ENCODE measurements at regions of chr12 and their contacts with region 1.

Region 1: GRCh38 chr12:116222358-116222757 is 55.1 kb downstream of the MED13L start:
- DNase-seq: peak; percentile 38
- ATAC-seq: no peak
- H3K4me3 ChIP-seq: no peak overlapping the region
- H3K27ac ChIP-seq: no peak overlapping the region
- H3K4me1 ChIP-seq: peaks cover 13% of the 10 kb centered on the region
- H3K27me3 ChIP-seq: no peaks in the 10 kb centered on the region
- CTCF ChIP-seq: no peak

Region 2: GRCh38 chr12:116066381-116067230 is 155.8 kb before region 1 on chr12:
- CTCF ChIA-PET with region 1: no interaction called
- POLR2A ChIA-PET with region 1: no interaction called
- in situ Hi-C with region 1: no loop called
- intact Hi-C with region 1: loop called (anchors 10 kb)
- DNase-seq: peak; percentile 18
- ATAC-seq: peak; percentile 68; the same call in 1 of the 2 replicates
- H3K4me3 ChIP-seq: no peak overlapping the region
- H3K27ac ChIP-seq: peak overlapping the region; percentile 70
- H3K4me1 ChIP-seq: peaks cover 46% of the 10 kb centered on the region
- H3K27me3 ChIP-seq: no peaks in the 10 kb centered on the region
- CTCF ChIP-seq: peak; percentile 93

Region 3: DNA sequence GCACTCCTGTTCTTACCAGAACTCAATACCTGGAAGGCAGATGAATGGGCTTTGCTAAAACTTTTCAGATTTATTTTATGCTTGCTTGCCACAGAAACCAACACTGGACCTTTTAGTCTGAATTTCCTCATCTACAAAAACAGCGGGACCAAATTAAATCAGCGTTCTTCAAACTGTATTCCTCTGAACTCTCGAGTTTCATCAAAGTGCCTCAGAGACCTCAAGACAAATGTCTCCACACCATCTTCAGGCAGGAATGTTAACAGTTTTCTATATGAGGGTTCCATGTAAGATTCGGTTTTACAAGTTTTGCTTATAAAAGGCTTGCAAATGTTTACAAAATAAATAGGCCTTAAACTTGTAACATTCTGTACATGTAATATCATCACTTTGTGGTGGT is 19.4 kb before region 1 on chr12:
- CTCF ChIA-PET with region 1: no interaction called
- POLR2A ChIA-PET with region 1: no interaction called
- in situ Hi-C with region 1: no loop called
- intact Hi-C with region 1: no loop called
- DNase-seq: no peak
- ATAC-seq: no peak
- H3K4me3 ChIP-seq: no peak overlapping the region
- H3K27ac ChIP-seq: 0 out of 2 replicates have a peak overlapping the region, but pooled peaks have one; percentile 18
- H3K4me1 ChIP-seq: peaks cover 36% of the 10 kb centered on the region
- H3K27me3 ChIP-seq: no peaks in the 10 kb centered on the region
- CTCF ChIP-seq: no peak